Left cardiac atrium (tissue), 4 donors: ENCODE measurements at regions of chr14 and their contacts with region 1.

Region 1: DNA sequence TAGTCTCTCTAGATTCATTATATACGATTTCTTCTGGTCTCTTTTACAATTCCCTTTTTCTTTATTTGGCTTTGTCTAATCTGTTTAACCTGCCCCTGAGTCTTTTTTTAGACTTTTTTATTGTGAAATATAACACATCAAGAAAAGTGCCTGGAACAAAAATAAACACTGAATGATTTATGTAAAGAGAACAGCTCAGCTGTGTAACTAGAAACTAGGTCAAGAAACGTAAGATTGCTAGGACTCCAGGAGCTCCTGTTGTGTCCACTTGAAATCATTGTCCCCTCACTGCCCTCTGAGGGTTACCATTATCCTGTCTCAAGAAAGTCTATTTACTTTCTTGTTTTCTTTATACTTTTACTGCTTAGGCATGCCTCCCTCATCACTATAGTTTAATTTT is 23.1 kb downstream of the EXD2 start:
- DNase-seq: no peak
- ATAC-seq: no peak

Region 2: GRCh38 chr14:68884031-68885030 is 330.1 kb before region 1 on chr14:
- intact Hi-C with region 1: loop called in 1 of 2 experiments (anchors 10 kb)
- DNase-seq: peak; percentile 64
- ATAC-seq: peak; percentile 73 to 81